OCI-LY7 (cell line): ENCODE measurements at regions of chr2 and their contacts with region 1.

Region 1: GRCh38 chr2:160087854-160088745 is 25.7 kb upstream of the PLA2R1 start:
- DNase-seq: peak; percentile 50
- H3K4me3 ChIP-seq: no peak overlapping the region
- H3K27ac ChIP-seq: no peak overlapping the region
- H3K4me1 ChIP-seq: no peaks in the 10 kb centered on the region
- CTCF ChIP-seq: peak; percentile 75

Region 2: DNA sequence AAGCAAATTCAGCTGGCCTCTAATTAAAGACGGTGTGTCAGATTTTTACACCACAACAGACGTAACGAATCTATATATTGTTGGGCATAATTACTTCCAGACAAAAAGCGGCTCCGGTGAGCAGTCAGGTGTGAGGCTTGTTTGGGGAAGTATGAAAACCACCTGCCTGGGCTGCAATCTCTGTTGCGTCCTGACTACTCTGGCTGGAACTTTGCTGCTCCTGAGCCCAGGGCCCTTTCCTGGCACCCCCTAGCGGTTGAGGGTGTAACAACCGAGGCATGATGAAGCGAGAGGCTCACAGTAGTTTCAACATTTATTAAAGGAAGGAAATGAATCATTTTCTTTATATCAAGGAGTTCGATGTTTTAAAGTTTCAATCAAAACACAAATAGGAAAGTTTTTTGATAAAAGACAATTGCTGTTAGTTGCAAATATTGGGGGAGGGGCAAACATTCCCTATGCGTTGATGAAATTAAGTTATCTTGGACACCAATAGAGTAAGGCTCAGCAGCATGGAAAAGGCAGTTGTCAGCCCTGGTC is 122.6 kb after region 1 on chr2:
- CTCF ChIA-PET with region 1: no interaction called
- POLR2A ChIA-PET with region 1: no interaction called
- intact Hi-C with region 1: loop called (anchors 1 kb)
- DNase-seq: peak; percentile 71
- H3K4me3 ChIP-seq: no peak overlapping the region
- H3K27ac ChIP-seq: no peak overlapping the region
- H3K4me1 ChIP-seq: no peaks in the 10 kb centered on the region
- CTCF ChIP-seq: peak; percentile 97

Region 3: GRCh38 chr2:160994141-160995002 is 906.3 kb after region 1 on chr2:
- CTCF ChIA-PET with region 1: no interaction called
- POLR2A ChIA-PET with region 1: no interaction called
- intact Hi-C with region 1: loop called (anchors 1 kb)
- DNase-seq: peak; percentile 64
- H3K4me3 ChIP-seq: no peak overlapping the region
- H3K27ac ChIP-seq: no peak overlapping the region
- H3K4me1 ChIP-seq: no peaks in the 10 kb centered on the region
- CTCF ChIP-seq: peak; percentile 95

Region 4: GRCh38 chr2:161273038-161273760 is 1185.1 kb after region 1 on chr2:
- CTCF ChIA-PET with region 1: no interaction called
- POLR2A ChIA-PET with region 1: no interaction called
- intact Hi-C with region 1: loop called (anchors 10 kb)
- DNase-seq: peak; percentile 78
- H3K4me3 ChIP-seq: no peak overlapping the region
- H3K27ac ChIP-seq: no peak overlapping the region
- H3K4me1 ChIP-seq: no peaks in the 10 kb centered on the region
- CTCF ChIP-seq: peak; percentile 96